ENCODE measurements at regions of chr12 and their contacts with region 1.

Region 1: GRCh38 chr12:9039397-9039977 is 50.1 kb downstream of the KLRG1 start:
- DNase-seq: peak; percentile 60

Region 2: GRCh38 chr12:8662593-8662992 is 376.9 kb before region 1 on chr12 and contains the start of gene MFAP5:
- in situ Hi-C with region 1: loop called (anchors 25 kb)
- DNase-seq: no peak

Region 3: GRCh38 chr12:8722286-8722685 is 317.2 kb before region 1 on chr12:
- in situ Hi-C with region 1: no loop called
- DNase-seq: no peak

Region 4: DNA sequence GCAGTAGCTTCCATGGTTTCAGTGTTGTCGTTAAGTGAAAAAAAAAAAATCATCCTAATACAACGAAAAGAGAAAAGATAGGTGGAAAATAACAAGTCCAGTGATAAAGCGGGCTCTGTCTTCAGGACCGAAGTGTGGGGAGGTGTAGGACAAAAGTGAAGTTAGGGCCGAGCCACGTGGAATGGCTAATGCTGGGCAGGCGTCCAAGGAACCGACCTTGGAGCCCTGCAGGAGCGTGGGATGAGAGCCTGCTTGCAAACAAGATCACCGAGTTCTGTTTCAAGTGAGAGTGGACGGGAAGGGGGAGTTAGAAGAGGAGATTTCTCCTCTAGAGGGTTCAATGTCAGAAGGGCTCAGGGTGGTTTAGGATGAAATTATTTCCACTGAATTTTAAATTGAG is 194.8 kb before region 1 on chr12:
- in situ Hi-C with region 1: no loop called
- DNase-seq: no peak

Region 5: DNA sequence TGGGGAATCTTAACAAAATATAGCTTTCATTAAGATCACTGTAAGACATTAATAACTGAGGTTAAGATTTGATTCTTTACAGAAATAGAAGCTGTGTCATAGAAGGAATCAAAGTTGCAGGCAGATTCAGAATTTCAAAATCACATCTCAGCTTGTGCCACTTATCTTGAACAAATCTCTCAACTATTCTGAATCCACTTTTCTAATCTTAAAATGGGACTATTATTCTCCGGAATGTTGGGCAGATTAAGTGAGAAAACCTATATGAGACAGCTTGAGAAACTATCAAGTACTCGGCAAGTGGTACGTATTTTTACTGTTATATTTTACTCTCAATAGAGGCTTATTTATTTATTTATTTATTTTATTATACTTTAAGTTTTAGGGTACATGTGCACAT is 140.3 kb after region 1 on chr12:
- in situ Hi-C with region 1: no loop called
- DNase-seq: no peak